ENCODE measurements at regions of chr14 and their contacts with region 1.

Region 1: DNA sequence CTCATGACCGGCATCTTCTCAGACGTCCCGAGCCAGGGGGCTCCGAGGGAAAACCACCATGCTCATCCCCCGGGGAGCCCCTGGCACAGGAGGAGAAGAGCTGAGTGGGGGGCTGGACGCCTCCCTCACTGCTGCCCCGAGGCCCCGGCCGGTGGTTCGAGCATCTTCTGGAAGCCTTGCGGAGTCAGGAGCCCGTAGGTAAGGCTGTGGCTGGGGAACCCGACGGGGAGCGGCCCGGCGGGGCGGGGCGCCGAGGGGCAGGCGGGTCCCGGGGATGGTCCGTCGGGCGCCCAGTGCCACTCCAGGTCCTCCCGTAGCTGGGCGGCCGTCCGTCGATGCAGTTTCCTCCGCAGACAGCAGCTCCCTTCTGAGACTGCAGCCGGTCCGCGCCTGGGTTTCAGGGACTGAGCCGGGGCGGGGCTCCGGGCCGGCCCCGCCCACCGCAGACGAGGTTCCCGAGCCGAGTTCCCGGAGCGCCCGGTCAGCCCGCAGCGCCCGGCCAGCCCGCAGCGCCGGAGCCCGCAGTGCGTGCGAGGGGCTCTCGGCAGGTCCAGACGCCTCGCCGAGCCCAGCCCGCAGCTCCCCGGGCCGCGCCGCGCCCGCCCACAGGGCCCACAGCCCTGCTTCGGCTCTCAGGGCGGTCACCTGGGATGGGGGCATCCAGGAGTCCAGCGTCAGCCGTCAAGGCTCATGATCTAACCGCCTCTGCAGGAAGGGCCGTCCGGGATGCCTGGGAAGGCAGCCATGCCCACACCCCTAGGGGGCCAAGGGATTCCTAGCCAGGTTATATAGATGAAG is at the start of gene PGF:
- DNase-seq: peak; percentile 50
- ATAC-seq: peak; percentile 79
- H3K4me3 Mint-ChIP-seq: peak within 1 kb of the TSS; percentile 41
- H3K27ac Mint-ChIP-seq: no peak within 1 kb of the TSS
- H3K4me1 Mint-ChIP-seq: no peaks in the 10 kb centered on the region
- H3K27me3 Mint-ChIP-seq: peaks cover 9% of the 10 kb centered on the region
- CTCF ChIP-seq: no peak
- total RNA-seq, gene PGF: not detected in 2 replicates

Region 2: DNA sequence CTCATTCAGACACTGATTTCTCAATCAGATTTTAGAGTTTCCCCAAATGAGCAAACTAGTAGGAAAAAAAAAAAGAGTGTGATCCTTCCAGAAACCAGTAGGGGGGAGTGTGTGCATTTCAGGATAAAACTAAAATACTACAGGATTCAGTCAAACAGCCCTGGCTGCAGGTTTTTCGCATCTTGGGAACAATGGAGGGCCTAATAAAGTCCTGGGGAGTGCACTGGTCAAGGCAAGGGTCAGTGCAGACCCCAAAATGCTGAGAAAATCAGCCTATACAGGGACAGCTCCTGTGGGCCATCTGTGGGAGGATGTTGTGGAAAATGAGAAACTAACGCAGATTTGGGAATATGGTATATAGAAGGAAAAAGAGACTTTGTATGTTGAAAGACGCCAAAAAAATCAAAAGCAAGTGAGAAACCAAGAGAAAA is 630.5 kb before region 1 on chr14:
- CTCF ChIA-PET with region 1: no interaction called
- POLR2A ChIA-PET with region 1: no interaction called
- intact Hi-C with region 1: no loop called
- DNase-seq: no peak
- ATAC-seq: no peak
- H3K4me3 Mint-ChIP-seq: no peak overlapping the region
- H3K27ac Mint-ChIP-seq: no peak overlapping the region
- H3K4me1 Mint-ChIP-seq: no peaks in the 10 kb centered on the region
- H3K27me3 Mint-ChIP-seq: peaks cover 11% of the 10 kb centered on the region
- CTCF ChIP-seq: no peak

Region 3: GRCh38 chr14:74784634-74785033 is 170.8 kb before region 1 on chr14:
- CTCF ChIA-PET with region 1: no interaction called
- POLR2A ChIA-PET with region 1: no interaction called
- intact Hi-C with region 1: no loop called
- DNase-seq: no peak
- ATAC-seq: no peak
- H3K4me3 Mint-ChIP-seq: no peak overlapping the region
- H3K27ac Mint-ChIP-seq: no peak overlapping the region
- H3K4me1 Mint-ChIP-seq: no peaks in the 10 kb centered on the region
- H3K27me3 Mint-ChIP-seq: no peaks in the 10 kb centered on the region
- CTCF ChIP-seq: no peak

Region 4: GRCh38 chr14:74968811-74969210 is 13.4 kb after region 1 on chr14:
- CTCF ChIA-PET with region 1: no interaction called
- POLR2A ChIA-PET with region 1: no interaction called
- intact Hi-C with region 1: loop called (anchors 2 kb)
- DNase-seq: no peak
- ATAC-seq: no peak
- H3K4me3 Mint-ChIP-seq: no peak overlapping the region
- H3K27ac Mint-ChIP-seq: no peak overlapping the region
- H3K4me1 Mint-ChIP-seq: no peaks in the 10 kb centered on the region
- H3K27me3 Mint-ChIP-seq: no peaks in the 10 kb centered on the region
- CTCF ChIP-seq: no peak

Region 5: DNA sequence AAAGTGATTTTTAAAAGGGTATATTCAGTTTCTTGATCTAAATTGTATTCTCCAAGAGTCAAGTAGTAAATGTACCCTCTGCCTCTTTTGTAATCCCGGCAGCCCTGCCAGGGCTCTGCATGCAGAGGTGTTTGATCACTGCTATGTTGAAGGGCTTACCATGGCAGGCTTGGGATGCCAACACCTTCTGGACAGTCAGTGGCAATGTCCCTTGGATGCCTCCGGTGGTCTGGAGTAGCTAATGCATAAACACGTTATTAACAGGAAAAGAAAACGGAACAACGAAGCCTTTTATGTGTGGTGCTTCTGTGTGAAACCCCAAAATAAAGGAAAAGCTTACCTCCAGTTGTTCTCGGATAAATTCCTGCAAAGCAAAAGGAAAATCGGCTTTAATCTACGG is 67.2 kb after region 1 on chr14:
- CTCF ChIA-PET with region 1: no interaction called
- POLR2A ChIA-PET with region 1: no interaction called
- intact Hi-C with region 1: no loop called
- DNase-seq: no peak
- ATAC-seq: no peak
- H3K4me3 Mint-ChIP-seq: no peak overlapping the region
- H3K27ac Mint-ChIP-seq: no peak overlapping the region
- H3K4me1 Mint-ChIP-seq: no peaks in the 10 kb centered on the region
- H3K27me3 Mint-ChIP-seq: no peaks in the 10 kb centered on the region
- CTCF ChIP-seq: no peak

Region 6: GRCh38 chr14:75697386-75697785 is 742.0 kb after region 1 on chr14:
- CTCF ChIA-PET with region 1: no interaction called
- POLR2A ChIA-PET with region 1: no interaction called
- intact Hi-C with region 1: no loop called
- DNase-seq: no peak
- ATAC-seq: no peak
- H3K4me3 Mint-ChIP-seq: no peak overlapping the region
- H3K27ac Mint-ChIP-seq: no peak overlapping the region
- H3K4me1 Mint-ChIP-seq: peaks cover 7% of the 10 kb centered on the region
- H3K27me3 Mint-ChIP-seq: no peaks in the 10 kb centered on the region
- CTCF ChIP-seq: no peak